Left ventricle myocardium inferior (tissue), 1 donor: ENCODE measurements at regions of chr5 and their contacts with region 1.

Region 1: GRCh38 chr5:35089334-35090314 is 41.9 kb upstream of the AGXT2 start:
- DNase-seq: no peak
- H3K4me3 ChIP-seq: no peak overlapping the region
- H3K27ac ChIP-seq: no peak overlapping the region
- H3K4me1 ChIP-seq: no peaks in the 10 kb centered on the region
- H3K27me3 ChIP-seq: peaks cover 28% of the 10 kb centered on the region
- CTCF ChIP-seq: peak; percentile 70

Region 2: GRCh38 chr5:34803974-34804732 is 285.5 kb before region 1 on chr5:
- intact Hi-C with region 1: no loop called
- DNase-seq: no peak
- H3K4me3 ChIP-seq: no peak overlapping the region
- H3K27ac ChIP-seq: no peak overlapping the region
- H3K4me1 ChIP-seq: no peaks in the 10 kb centered on the region
- H3K27me3 ChIP-seq: no peaks in the 10 kb centered on the region
- CTCF ChIP-seq: no peak

Region 3: GRCh38 chr5:35436410-35437057 is 346.9 kb after region 1 on chr5:
- intact Hi-C with region 1: loop called (anchors 5 kb)
- DNase-seq: no peak
- H3K4me3 ChIP-seq: no peak overlapping the region
- H3K27ac ChIP-seq: no peak overlapping the region
- H3K4me1 ChIP-seq: no peaks in the 10 kb centered on the region
- H3K27me3 ChIP-seq: peaks cover 24% of the 10 kb centered on the region
- CTCF ChIP-seq: peak; percentile 53